MCF 10A (cell line): ENCODE measurements at regions of chr21 and their contacts with region 1.

Region 1: DNA sequence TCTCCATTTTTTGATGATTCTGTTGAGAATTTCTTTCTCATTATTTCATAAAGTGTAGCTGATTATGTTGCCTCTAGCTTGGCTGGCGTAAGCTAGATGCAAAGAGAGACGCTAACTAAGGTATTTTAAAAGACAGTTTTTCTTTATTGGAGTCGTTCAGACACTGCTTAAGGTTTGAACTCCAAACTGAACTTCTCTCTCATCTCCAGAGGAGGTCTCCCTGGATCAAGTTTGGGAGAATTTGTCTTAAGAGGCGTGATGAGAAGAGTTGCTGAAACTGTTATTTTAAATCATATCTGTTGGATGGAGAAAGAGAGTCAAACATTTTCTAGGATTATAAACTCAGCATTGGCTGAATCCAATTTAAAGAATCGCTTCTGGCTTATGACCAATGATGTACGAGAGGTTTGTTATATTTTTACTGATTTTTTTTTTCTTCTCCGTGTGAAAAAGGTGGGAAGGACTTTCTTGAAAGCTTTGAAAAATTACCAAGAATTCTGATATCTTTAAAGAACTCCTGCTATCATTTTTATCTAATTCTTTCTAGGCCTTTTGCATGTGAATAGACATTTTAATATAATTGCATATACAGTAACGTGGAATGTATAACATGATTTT is 34.0 kb downstream of the MAP3K7CL start:
- DNase-seq: peak; percentile 89
- H3K4me3 Mint-ChIP-seq: no peak overlapping the region
- H3K27ac Mint-ChIP-seq: peak overlapping the region; percentile 93
- H3K4me1 Mint-ChIP-seq: peaks cover 49% of the 10 kb centered on the region
- H3K27me3 Mint-ChIP-seq: no peaks in the 10 kb centered on the region
- CTCF ChIP-seq: peak; percentile 84

Region 2: DNA sequence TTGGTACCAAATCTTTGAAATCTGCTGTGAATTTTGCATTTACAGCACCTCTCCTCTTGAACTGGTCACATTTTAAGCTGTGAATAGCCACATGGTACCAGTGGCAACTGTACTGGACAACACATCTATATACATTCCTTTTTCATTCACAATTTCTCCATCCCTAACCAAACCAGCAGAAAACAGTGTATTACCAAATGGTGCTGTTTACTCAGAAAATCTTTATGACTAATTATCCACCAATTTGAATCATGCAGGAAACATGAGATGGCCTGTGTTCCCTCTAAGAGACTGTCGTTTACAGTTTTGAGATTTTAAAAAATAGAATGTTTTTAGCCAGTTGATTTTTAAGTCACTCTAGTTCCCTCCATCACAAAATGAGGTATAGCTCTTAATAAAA is 73.4 kb before region 1 on chr21:
- CTCF ChIA-PET with region 1: interaction called, 81 read pairs
- POLR2A ChIA-PET with region 1: interaction called, 36 read pairs
- intact Hi-C with region 1: loop called (anchors 1 kb)
- DNase-seq: peak; percentile 65
- H3K4me3 Mint-ChIP-seq: no peak overlapping the region
- H3K27ac Mint-ChIP-seq: peak overlapping the region; percentile 80
- H3K4me1 Mint-ChIP-seq: peaks cover 34% of the 10 kb centered on the region
- H3K27me3 Mint-ChIP-seq: no peaks in the 10 kb centered on the region
- CTCF ChIP-seq: no peak

Region 3: GRCh38 chr21:29181799-29182470 is 17.5 kb after region 1 on chr21:
- CTCF ChIA-PET with region 1: interaction called, 10 read pairs
- POLR2A ChIA-PET with region 1: interaction called, 24 read pairs
- intact Hi-C with region 1: no loop called
- DNase-seq: peak; percentile 78
- H3K4me3 Mint-ChIP-seq: peak overlapping the region; percentile 82
- H3K27ac Mint-ChIP-seq: peak overlapping the region; percentile 99
- H3K4me1 Mint-ChIP-seq: peaks cover 31% of the 10 kb centered on the region
- H3K27me3 Mint-ChIP-seq: no peaks in the 10 kb centered on the region
- CTCF ChIP-seq: no peak

Region 4: GRCh38 chr21:29258626-29259335 is 94.3 kb after region 1 on chr21:
- CTCF ChIA-PET with region 1: interaction called, 13 read pairs
- POLR2A ChIA-PET with region 1: interaction called, 14 read pairs
- intact Hi-C with region 1: no loop called
- DNase-seq: peak; percentile 89
- H3K4me3 Mint-ChIP-seq: peak overlapping the region; percentile 47
- H3K27ac Mint-ChIP-seq: peak overlapping the region; percentile 95
- H3K4me1 Mint-ChIP-seq: peaks cover 55% of the 10 kb centered on the region
- H3K27me3 Mint-ChIP-seq: no peaks in the 10 kb centered on the region
- CTCF ChIP-seq: no peak

Region 5: DNA sequence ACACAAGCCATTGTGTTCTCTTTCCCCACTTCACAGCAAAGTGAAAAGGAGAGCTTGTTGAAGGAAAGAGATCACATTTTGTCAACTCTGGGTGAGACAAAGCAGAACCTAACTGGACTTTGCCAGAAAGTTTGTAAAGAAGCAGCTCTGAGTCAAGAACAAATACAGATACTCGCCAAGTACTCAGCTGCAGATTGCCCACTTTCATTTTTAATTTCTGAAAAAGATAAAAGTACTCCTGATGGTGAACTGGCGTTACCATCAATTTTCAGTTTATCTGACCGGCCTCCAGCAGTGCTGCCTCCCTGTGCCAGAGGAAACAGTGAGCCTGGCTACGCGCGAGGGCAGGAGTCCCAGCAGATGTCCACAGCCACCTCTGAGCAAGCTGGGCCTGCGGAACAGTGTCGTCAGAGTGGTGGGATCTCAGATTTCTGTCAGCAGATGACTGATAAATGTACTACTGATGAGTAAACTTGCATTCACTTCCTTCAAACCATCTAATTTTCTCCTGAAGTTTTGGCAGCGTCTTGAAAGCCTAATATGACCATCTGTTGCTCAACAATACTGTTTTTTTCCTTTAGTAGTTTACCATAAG is 178.0 kb after region 1 on chr21:
- CTCF ChIA-PET with region 1: interaction called, 38 read pairs
- POLR2A ChIA-PET with region 1: interaction called, 13 read pairs
- intact Hi-C with region 1: no loop called
- DNase-seq: peak; percentile 94
- H3K4me3 Mint-ChIP-seq: peak overlapping the region; percentile 60
- H3K27ac Mint-ChIP-seq: peak overlapping the region; percentile 84
- H3K4me1 Mint-ChIP-seq: peaks cover 34% of the 10 kb centered on the region
- H3K27me3 Mint-ChIP-seq: no peaks in the 10 kb centered on the region
- CTCF ChIP-seq: no peak

Region 6: GRCh38 chr21:29477941-29478340 is 313.5 kb after region 1 on chr21:
- CTCF ChIA-PET with region 1: interaction called, 5 read pairs
- POLR2A ChIA-PET with region 1: no interaction called
- intact Hi-C with region 1: loop called (anchors 5 kb)
- DNase-seq: peak; percentile 4
- H3K4me3 Mint-ChIP-seq: no peak overlapping the region
- H3K27ac Mint-ChIP-seq: no peak overlapping the region
- H3K4me1 Mint-ChIP-seq: no peaks in the 10 kb centered on the region
- H3K27me3 Mint-ChIP-seq: no peaks in the 10 kb centered on the region
- CTCF ChIP-seq: no peak

Region 7: DNA sequence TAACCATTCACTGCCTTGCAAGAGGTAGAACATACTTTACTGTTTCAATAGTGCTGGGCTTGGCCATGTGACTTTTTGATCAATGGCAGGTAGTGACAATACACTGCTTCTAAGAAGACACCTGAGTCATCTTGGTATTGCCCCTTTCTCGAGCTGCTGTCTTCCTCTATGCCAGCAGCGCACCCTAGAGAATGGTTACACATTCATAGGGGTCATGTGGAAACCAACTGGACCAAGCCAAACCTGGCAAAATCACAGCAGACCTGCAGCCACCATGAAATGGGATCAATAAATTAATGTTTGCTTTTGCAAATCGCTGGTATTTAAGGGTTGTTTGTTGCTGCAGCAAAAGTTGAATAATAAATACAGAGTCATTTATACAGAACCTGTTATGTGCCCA is 653.0 kb after region 1 on chr21:
- CTCF ChIA-PET with region 1: no interaction called
- POLR2A ChIA-PET with region 1: no interaction called
- intact Hi-C with region 1: no loop called
- DNase-seq: no peak
- H3K4me3 Mint-ChIP-seq: no peak overlapping the region
- H3K27ac Mint-ChIP-seq: no peak overlapping the region
- H3K4me1 Mint-ChIP-seq: no peaks in the 10 kb centered on the region
- H3K27me3 Mint-ChIP-seq: no peaks in the 10 kb centered on the region
- CTCF ChIP-seq: no peak